CD14-positive monocyte (primary cell): ENCODE measurements at regions of chr13 and their contacts with region 1.

Region 1: GRCh38 chr13:49300739-49301589 is 53.2 kb downstream of the CDADC1 start:
- DNase-seq: peak; percentile 46 to 77 (median 68)
- H3K4me3 ChIP-seq: peak overlapping the region; percentile 35 to 70 (median 48)
- H3K4me3 Mint-ChIP-seq: peak overlapping the region; percentile 87 to 93
- H3K27ac ChIP-seq: peak overlapping the region in 1 of 2 donors; percentile 67
- H3K27ac Mint-ChIP-seq: peak overlapping the region in 6 of 7 donors; percentile 75 to 90 (median 80)
- H3K4me1 ChIP-seq: peaks cover 0 to 4% of the 10 kb centered on the region in 2 donors
- H3K4me1 Mint-ChIP-seq: peaks cover 9% of the 10 kb centered on the region
- H3K27me3 ChIP-seq: no peaks in the 10 kb centered on the region
- H3K27me3 Mint-ChIP-seq: peaks cover 0 to 7% (median 2%) of the 10 kb centered on the region in 3 donors
- CTCF ChIP-seq: peak; percentile 84

Region 2: DNA sequence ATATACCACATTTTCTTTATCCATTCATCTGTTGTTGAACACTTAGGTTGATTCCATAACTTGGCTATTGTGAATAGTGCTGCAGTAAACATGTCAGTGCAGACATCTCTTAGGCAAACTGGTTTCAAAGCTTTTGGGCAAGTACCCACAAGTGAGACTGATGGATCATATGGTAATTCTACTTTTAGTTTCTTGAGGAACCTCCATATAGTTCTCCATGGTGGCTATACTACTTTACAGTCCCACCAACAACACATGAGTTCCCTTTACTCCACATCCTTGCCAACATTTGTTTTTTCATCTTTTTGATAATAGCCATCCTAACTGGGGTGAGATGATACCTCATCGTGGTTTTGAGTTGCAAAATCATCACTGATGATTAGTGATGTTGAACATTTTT is 638.7 kb before region 1 on chr13:
- intact Hi-C with region 1: no loop called
- DNase-seq: peak in 1 of 3 donors; percentile 12
- H3K4me3 ChIP-seq: no peak overlapping the region
- H3K4me3 Mint-ChIP-seq: no peak overlapping the region
- H3K27ac ChIP-seq: peak overlapping the region in 1 of 2 donors; percentile 68
- H3K27ac Mint-ChIP-seq: peak overlapping the region in 3 of 7 donors; percentile 25 to 97 (median 68)
- H3K4me1 ChIP-seq: peaks cover 43 to 45% of the 10 kb centered on the region in 2 donors
- H3K4me1 Mint-ChIP-seq: peaks cover 42% of the 10 kb centered on the region
- H3K27me3 ChIP-seq: no peaks in the 10 kb centered on the region
- H3K27me3 Mint-ChIP-seq: peaks cover 0 to 3% (median 1%) of the 10 kb centered on the region in 3 donors
- CTCF ChIP-seq: no peak

Region 3: DNA sequence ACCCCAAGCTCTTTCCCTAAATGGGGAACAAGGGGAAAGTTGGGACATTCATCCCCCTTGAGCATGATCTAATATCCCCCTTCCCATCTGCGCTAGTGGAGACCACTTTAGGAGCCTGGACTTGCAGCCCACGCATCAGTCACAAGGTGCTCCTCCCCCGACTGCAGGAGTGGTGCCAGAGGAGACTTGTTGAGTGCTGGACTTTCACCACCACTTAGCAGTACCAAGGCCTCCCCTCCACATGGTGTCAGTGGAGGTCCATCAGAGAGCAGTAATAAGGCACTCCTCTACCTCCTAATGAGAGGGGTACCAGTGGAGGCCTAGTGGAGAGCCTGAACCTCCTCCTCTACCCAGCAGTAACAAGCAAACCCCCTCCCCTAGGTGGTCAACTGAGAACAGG is 120.4 kb after region 1 on chr13:
- intact Hi-C with region 1: no loop called
- DNase-seq: peak in 1 of 3 donors; percentile 6
- H3K4me3 ChIP-seq: no peak overlapping the region
- H3K4me3 Mint-ChIP-seq: no peak overlapping the region
- H3K27ac ChIP-seq: no peak overlapping the region
- H3K27ac Mint-ChIP-seq: no peak overlapping the region
- H3K4me1 ChIP-seq: peaks cover 18 to 20% of the 10 kb centered on the region in 2 donors
- H3K4me1 Mint-ChIP-seq: peaks cover 22% of the 10 kb centered on the region
- H3K27me3 ChIP-seq: no peaks in the 10 kb centered on the region
- H3K27me3 Mint-ChIP-seq: no peaks in the 10 kb centered on the region
- CTCF ChIP-seq: no peak

Region 4: GRCh38 chr13:49436890-49437289 is 135.9 kb after region 1 on chr13:
- intact Hi-C with region 1: loop called in 1 of 2 experiments (anchors 10 kb)
- DNase-seq: peak in 1 of 3 donors; percentile 5
- H3K4me3 ChIP-seq: no peak overlapping the region
- H3K4me3 Mint-ChIP-seq: no peak overlapping the region
- H3K27ac ChIP-seq: no peak overlapping the region
- H3K27ac Mint-ChIP-seq: no peak overlapping the region
- H3K4me1 ChIP-seq: no peaks in the 10 kb centered on the region
- H3K4me1 Mint-ChIP-seq: peaks cover 4% of the 10 kb centered on the region
- H3K27me3 ChIP-seq: no peaks in the 10 kb centered on the region
- H3K27me3 Mint-ChIP-seq: peaks cover 0 to 3% (median 3%) of the 10 kb centered on the region in 3 donors
- CTCF ChIP-seq: no peak

Region 5: DNA sequence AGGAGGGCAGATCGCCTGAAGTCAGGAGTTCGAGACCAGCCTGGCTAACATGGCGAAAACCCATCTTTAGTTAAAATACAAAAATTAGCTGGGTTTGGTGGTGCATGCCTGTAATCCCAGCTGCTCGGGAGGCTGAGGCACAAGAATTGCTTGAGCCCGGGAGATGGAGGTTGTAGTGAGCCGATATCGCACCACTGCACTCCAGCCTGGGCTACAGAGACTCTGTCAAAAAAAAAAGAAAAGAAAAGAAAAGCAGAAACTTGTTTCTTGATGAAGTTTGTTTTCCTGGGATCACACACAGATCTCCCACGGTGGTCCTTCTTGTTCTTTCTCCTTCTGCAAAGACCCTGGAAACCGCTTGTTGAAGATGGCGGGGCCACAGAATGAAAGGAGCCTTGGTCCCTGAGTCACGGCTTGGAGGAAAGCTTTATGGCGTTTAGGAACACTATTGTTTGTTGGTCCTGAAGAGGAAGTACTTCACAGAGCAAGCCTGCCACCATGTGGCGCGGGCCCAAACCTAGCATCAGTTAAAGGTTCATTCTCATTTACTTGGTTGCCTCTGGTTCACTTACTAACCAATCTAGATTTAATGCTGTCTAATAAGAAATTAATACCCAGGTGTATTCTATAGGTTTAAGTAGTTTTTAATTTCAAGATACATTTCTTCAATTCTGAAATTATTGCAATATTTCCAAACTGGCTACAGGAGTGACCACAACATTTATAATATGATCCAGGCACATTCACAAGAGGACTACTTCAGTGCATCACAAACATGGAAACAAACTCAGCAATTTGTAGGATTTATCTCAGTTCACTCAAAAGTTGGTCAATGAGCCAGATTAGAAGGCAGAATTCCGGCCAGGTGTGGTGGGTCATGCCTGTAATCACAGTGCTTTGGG is 306.0 kb after region 1 on chr13:
- intact Hi-C with region 1: loop called (anchors 2 to 5 kb)
- DNase-seq: peak; percentile 74 to 91 (median 85)
- H3K4me3 ChIP-seq: peak overlapping the region; percentile 29 to 87 (median 76)
- H3K4me3 Mint-ChIP-seq: peak overlapping the region; percentile 84 to 94
- H3K27ac ChIP-seq: peak overlapping the region in 1 of 2 donors; percentile 71
- H3K27ac Mint-ChIP-seq: peak overlapping the region; percentile 33 to 85 (median 71)
- H3K4me1 ChIP-seq: peaks cover 6 to 15% of the 10 kb centered on the region in 2 donors
- H3K4me1 Mint-ChIP-seq: peaks cover 16% of the 10 kb centered on the region
- H3K27me3 ChIP-seq: no peaks in the 10 kb centered on the region
- H3K27me3 Mint-ChIP-seq: peaks cover 0 to 2% (median 0%) of the 10 kb centered on the region in 3 donors
- CTCF ChIP-seq: peak; percentile 70